ENCODE measurements at regions of chr4 and their contacts with region 1.

Region 1: GRCh38 chr4:141860974-141861373 is 224.6 kb downstream of the IL15 start:
- DNase-seq: peak; percentile 27
- H3K4me3 Mint-ChIP-seq: no peak overlapping the region
- H3K27ac Mint-ChIP-seq: no peak overlapping the region
- H3K4me1 Mint-ChIP-seq: peaks cover 34% of the 10 kb centered on the region
- H3K27me3 Mint-ChIP-seq: no peaks in the 10 kb centered on the region
- CTCF ChIP-seq: no peak

Region 2: GRCh38 chr4:140816806-140817510 is 1044.0 kb before region 1 on chr4:
- CTCF ChIA-PET with region 1: no interaction called
- intact Hi-C with region 1: no loop called
- DNase-seq: no peak
- H3K4me3 Mint-ChIP-seq: no peak overlapping the region
- H3K27ac Mint-ChIP-seq: no peak overlapping the region
- H3K4me1 Mint-ChIP-seq: no peaks in the 10 kb centered on the region
- H3K27me3 Mint-ChIP-seq: peaks cover 43% of the 10 kb centered on the region
- CTCF ChIP-seq: no peak

Region 3: GRCh38 chr4:142095886-142096605 is 235.1 kb after region 1 on chr4:
- CTCF ChIA-PET with region 1: no interaction called
- intact Hi-C with region 1: loop called (anchors 10 kb)
- DNase-seq: peak; percentile 55
- H3K4me3 Mint-ChIP-seq: peak overlapping the region; percentile 18
- H3K27ac Mint-ChIP-seq: peak overlapping the region; percentile 82
- H3K4me1 Mint-ChIP-seq: peaks cover 36% of the 10 kb centered on the region
- H3K27me3 Mint-ChIP-seq: no peaks in the 10 kb centered on the region
- CTCF ChIP-seq: no peak

Measured in Calu3 (cell line).